ENCODE measurements at regions of chr12 and their contacts with region 1.

Region 1: DNA sequence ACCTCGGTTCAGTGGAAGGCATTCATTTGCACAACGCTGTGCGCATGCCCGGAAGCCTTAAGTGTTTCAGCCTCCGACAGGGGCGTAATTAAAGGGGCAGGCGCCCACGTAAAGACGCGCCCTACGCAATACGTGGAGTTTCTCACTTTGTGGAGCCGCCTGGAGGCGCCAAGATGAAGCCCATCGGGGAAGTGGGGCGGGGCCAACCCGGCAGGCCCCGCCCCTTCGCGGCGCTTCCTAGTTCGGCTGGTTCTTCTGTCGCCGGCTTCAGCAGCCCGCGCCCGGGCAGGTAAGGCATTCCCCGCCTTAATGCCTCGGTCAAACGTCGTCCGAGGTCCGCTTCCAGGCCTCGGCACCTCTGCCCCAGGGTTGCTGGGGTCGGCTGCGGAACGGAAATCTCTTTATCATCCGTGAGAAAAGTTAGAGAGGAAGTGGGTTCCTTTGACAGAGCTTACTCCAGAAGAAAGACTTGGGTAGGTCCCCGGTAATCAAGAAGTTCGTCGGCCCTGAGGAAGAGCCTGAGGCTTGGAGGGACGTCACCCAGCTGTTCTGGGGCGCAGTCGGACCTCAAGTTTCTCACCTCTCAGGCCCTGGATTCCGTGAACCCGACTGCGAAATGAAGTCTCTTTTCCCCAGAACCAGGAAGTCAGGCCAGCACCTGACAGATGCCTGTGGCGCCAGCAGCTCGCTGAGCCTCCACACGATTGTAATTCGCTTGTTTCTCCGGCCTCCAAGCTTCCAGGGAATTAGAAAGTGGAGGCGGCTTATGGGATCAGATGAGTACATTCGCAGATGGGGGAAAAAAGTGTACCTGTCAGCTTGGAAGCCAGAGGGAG is at the starts of genes IRAK4 and PUS7L:
- DNase-seq: peak; percentile 98
- ATAC-seq: peak; percentile 100
- total RNA-seq, gene IRAK4: 6.2 TPM
- total RNA-seq, gene PUS7L: 3.5 TPM

Region 2: DNA sequence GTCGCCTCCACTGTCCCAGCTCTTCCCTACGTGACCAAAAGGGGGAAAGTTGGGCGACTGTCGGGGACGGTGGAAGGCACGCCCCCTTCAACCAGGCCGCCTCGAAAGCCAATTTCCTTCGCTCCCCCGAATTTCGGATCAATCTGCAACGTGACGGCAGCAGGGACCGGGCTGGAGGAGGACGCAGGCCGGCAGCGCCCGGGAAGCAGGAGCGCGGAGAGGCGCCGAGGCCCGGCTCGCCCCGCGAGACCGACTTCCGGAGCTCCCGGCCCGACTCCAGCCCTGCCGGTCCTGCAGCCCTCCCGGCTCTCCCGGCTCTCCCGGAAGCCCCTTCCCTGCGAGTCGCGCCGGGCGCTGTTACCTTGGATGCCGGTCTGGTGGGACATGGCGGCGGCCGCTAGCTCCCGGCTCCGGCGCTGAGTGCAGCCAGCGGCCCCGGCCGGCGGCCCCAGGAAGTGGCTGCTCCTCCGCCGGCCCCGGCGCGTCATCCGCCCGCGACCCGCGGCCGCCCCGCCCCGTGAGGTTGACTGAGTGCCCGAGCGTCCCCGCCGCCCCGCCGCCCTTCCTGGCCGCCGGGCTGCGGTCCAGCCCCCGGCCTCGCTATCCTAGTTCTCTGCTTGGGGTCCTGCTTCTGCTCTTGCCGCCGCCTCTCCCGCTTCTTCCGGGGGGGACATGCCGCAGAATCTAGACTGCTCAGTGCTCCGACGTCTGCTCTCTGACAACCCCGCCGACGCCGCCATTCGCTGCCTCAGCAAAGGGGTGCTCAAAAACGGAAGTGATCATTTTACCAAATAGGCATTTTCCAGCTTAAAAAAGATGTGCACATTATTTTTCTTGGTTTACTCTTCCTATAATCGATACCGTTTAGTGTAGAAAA is 47.2 kb after region 1 on chr12 and contains the start of gene TWF1:
- intact Hi-C with region 1: loop called (anchors 2 kb)
- DNase-seq: peak; percentile 95
- ATAC-seq: peak; percentile 100
- total RNA-seq, gene TWF1: 14.0 TPM